ENCODE measurements at regions of chr3 and their contacts with region 1.

Region 1: GRCh38 chr3:42190701-42191462 is 75.1 kb downstream of the CCK start:
- DNase-seq: peak; percentile 44 to 81 (median 63)
- ATAC-seq: peak; percentile 68
- H3K4me3 ChIP-seq: no peak overlapping the region
- H3K4me3 Mint-ChIP-seq: no peak overlapping the region
- H3K27ac ChIP-seq: no peak overlapping the region
- H3K27ac Mint-ChIP-seq: peak overlapping the region; percentile 48
- H3K4me1 ChIP-seq: peaks cover 15% of the 10 kb centered on the region
- H3K4me1 Mint-ChIP-seq: peaks cover 23% of the 10 kb centered on the region
- H3K27me3 ChIP-seq: no peaks in the 10 kb centered on the region
- H3K27me3 Mint-ChIP-seq: no peaks in the 10 kb centered on the region
- CTCF ChIP-seq: peak; percentile 84

Region 2: DNA sequence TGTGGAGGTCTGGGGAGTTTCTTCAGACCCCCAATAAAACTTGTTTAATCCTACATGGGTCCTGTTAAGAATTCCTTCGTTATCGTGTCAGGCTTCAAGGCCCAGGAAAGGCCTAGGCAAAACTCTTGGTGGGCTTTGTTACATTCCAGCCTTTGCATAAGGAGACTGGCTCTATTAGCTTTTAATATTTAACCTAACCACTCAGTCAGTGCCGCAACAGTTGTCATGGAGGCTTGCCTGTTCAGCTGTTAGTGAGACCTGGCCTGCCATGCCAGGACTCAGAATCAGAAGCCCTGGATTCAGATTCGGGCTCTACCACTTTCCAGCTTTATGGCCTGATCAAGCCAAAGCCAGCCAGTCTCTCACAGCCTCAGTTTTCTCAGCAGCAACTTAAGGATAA is 1861.8 kb before region 1 on chr3:
- CTCF ChIA-PET with region 1: no interaction called
- POLR2A ChIA-PET with region 1: no interaction called
- intact Hi-C with region 1: loop called in 1 of 2 experiments (anchors 5 kb)
- DNase-seq: no peak
- ATAC-seq: no peak
- H3K4me3 ChIP-seq: no peak overlapping the region
- H3K4me3 Mint-ChIP-seq: no peak overlapping the region
- H3K27ac ChIP-seq: no peak overlapping the region
- H3K27ac Mint-ChIP-seq: no peak overlapping the region
- H3K4me1 ChIP-seq: no peaks in the 10 kb centered on the region
- H3K4me1 Mint-ChIP-seq: no peaks in the 10 kb centered on the region
- H3K27me3 ChIP-seq: no peaks in the 10 kb centered on the region
- H3K27me3 Mint-ChIP-seq: no peaks in the 10 kb centered on the region
- CTCF ChIP-seq: no peak

Region 3: GRCh38 chr3:41893977-41894376 is 296.9 kb before region 1 on chr3:
- CTCF ChIA-PET with region 1: interaction called, 5 read pairs
- POLR2A ChIA-PET with region 1: interaction called, 3 read pairs
- intact Hi-C with region 1: loop called in 1 of 2 experiments (anchors 5 kb)
- DNase-seq: peak in 4 of 14 experiments; percentile 30 to 59 (median 51)
- ATAC-seq: no peak
- H3K4me3 ChIP-seq: no peak overlapping the region
- H3K4me3 Mint-ChIP-seq: no peak overlapping the region
- H3K27ac ChIP-seq: no peak overlapping the region
- H3K27ac Mint-ChIP-seq: no peak overlapping the region
- H3K4me1 ChIP-seq: no peaks in the 10 kb centered on the region
- H3K4me1 Mint-ChIP-seq: no peaks in the 10 kb centered on the region
- H3K27me3 ChIP-seq: no peaks in the 10 kb centered on the region
- H3K27me3 Mint-ChIP-seq: no peaks in the 10 kb centered on the region
- CTCF ChIP-seq: peak; percentile 74

Region 4: GRCh38 chr3:42118762-42119361 is 72.0 kb before region 1 on chr3:
- CTCF ChIA-PET with region 1: no interaction called
- POLR2A ChIA-PET with region 1: no interaction called
- intact Hi-C with region 1: loop called (anchors 1 to 2 kb)
- DNase-seq: peak in 4 of 14 experiments; percentile 15 to 32 (median 18)
- ATAC-seq: no peak
- H3K4me3 ChIP-seq: no peak overlapping the region
- H3K4me3 Mint-ChIP-seq: no peak overlapping the region
- H3K27ac ChIP-seq: no peak overlapping the region
- H3K27ac Mint-ChIP-seq: no peak overlapping the region
- H3K4me1 ChIP-seq: no peaks in the 10 kb centered on the region
- H3K4me1 Mint-ChIP-seq: peaks cover 18% of the 10 kb centered on the region
- H3K27me3 ChIP-seq: no peaks in the 10 kb centered on the region
- H3K27me3 Mint-ChIP-seq: no peaks in the 10 kb centered on the region
- CTCF ChIP-seq: no peak